Mammary epithelial cell (primary cell): ENCODE measurements at regions of chr22 and their contacts with region 1.

Region 1: DNA sequence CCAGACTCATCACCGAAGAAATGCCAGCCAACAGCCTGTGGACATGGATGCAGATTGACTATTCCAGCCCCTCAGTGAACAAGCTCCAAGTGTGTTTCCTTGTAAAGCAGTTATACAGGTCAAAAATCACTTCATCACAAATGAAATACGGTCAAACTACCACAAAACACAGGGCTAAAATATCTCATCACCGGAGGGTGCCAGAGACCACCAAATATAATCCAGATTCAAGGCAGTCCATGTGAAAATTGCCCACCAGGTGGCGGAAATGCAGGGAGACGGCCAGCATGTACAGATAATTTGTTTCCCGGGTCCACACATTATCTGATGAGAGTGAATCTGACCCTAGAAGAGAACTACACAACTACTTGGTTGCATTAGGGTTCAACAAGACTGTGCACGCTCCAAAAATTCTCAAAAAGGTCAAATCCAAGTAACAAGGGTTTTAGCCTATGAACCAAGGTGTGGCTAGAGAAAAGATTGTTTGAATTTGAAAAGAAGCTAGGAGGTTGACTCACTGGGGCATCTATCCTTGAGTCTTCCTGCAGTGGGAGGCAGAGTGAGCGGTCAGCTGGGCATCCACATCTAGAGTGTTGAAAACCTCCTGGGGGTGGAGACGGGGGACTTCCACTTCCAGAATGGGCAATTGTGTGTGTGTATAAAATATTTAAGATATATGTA is 71.7 kb downstream of the IGLL5 start:
- DNase-seq: peak; percentile 48
- H3K4me3 ChIP-seq: no peak overlapping the region
- H3K27ac ChIP-seq: no peak overlapping the region
- H3K4me1 ChIP-seq: no peaks in the 10 kb centered on the region
- H3K27me3 ChIP-seq: no peaks in the 10 kb centered on the region
- CTCF ChIP-seq: peak; percentile 67 to 81

Region 2: GRCh38 chr22:22463855-22464540 is 495.3 kb before region 1 on chr22:
- CTCF ChIA-PET with region 1: no interaction called
- dilution Hi-C with region 1: no loop called
- in situ Hi-C with region 1: no loop called
- intact Hi-C with region 1: loop called (anchors 1 kb)
- DNase-seq: peak; percentile 25
- H3K4me3 ChIP-seq: no peak overlapping the region
- H3K27ac ChIP-seq: no peak overlapping the region
- H3K4me1 ChIP-seq: no peaks in the 10 kb centered on the region
- H3K27me3 ChIP-seq: no peaks in the 10 kb centered on the region
- CTCF ChIP-seq: peak; percentile 45 to 62

Region 3: DNA sequence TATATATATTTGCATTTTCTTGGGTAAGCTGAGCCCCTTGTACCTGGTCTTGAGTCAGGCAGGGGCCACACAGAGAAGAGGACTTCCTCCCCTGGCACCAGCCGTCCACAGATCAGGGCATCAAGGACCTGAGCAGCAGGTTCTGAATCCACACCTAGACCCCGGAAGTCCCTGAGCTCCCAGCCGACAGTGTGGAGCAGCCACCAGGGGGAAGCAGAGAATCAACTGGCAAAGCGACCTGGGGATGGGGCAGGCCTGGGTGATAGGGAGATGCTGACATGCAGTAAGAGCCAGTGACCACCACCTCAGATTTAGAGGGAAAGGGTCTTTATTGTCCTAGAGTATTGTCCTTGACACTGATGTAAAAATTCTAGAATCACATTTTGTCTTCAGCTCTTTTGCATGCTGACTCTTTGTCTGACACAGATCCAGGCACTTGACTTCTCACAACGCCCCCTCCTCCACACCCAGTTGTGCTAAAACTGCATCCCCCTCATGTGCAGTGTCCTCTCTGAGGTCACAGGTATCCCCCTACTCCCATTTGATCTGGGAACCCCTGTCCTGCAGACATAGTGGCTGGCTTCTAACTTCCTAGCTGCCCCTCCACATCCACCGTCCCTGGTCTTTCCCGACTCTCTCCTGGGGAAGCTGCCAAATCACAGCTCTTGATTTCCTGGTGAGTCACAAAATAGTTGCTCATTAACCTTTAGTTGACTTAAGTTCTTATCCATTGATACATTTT is 205.6 kb before region 1 on chr22:
- CTCF ChIA-PET with region 1: no interaction called
- dilution Hi-C with region 1: no loop called
- in situ Hi-C with region 1: no loop called
- intact Hi-C with region 1: loop called (anchors 5 kb)
- DNase-seq: peak; percentile 5
- H3K4me3 ChIP-seq: no peak overlapping the region
- H3K27ac ChIP-seq: no peak overlapping the region
- H3K4me1 ChIP-seq: no peaks in the 10 kb centered on the region
- H3K27me3 ChIP-seq: no peaks in the 10 kb centered on the region
- CTCF ChIP-seq: peak; percentile 72 to 79

Region 4: GRCh38 chr22:22823131-22823810 is 136.0 kb before region 1 on chr22:
- CTCF ChIA-PET with region 1: no interaction called
- dilution Hi-C with region 1: no loop called
- in situ Hi-C with region 1: no loop called
- intact Hi-C with region 1: no loop called
- DNase-seq: no peak
- H3K4me3 ChIP-seq: no peak overlapping the region
- H3K27ac ChIP-seq: no peak overlapping the region
- H3K4me1 ChIP-seq: no peaks in the 10 kb centered on the region
- H3K27me3 ChIP-seq: no peaks in the 10 kb centered on the region
- CTCF ChIP-seq: no peak

Region 5: GRCh38 chr22:22848364-22848866 is 110.9 kb before region 1 on chr22:
- CTCF ChIA-PET with region 1: interaction called, 3 read pairs
- dilution Hi-C with region 1: no loop called
- in situ Hi-C with region 1: loop called in 1 of 2 experiments (anchors 10 kb)
- intact Hi-C with region 1: loop called (anchors 1 kb)
- DNase-seq: peak; percentile 28
- H3K4me3 ChIP-seq: no peak overlapping the region
- H3K27ac ChIP-seq: no peak overlapping the region
- H3K4me1 ChIP-seq: no peaks in the 10 kb centered on the region
- H3K27me3 ChIP-seq: no peaks in the 10 kb centered on the region
- CTCF ChIP-seq: peak; percentile 97 to 98

Region 6: DNA sequence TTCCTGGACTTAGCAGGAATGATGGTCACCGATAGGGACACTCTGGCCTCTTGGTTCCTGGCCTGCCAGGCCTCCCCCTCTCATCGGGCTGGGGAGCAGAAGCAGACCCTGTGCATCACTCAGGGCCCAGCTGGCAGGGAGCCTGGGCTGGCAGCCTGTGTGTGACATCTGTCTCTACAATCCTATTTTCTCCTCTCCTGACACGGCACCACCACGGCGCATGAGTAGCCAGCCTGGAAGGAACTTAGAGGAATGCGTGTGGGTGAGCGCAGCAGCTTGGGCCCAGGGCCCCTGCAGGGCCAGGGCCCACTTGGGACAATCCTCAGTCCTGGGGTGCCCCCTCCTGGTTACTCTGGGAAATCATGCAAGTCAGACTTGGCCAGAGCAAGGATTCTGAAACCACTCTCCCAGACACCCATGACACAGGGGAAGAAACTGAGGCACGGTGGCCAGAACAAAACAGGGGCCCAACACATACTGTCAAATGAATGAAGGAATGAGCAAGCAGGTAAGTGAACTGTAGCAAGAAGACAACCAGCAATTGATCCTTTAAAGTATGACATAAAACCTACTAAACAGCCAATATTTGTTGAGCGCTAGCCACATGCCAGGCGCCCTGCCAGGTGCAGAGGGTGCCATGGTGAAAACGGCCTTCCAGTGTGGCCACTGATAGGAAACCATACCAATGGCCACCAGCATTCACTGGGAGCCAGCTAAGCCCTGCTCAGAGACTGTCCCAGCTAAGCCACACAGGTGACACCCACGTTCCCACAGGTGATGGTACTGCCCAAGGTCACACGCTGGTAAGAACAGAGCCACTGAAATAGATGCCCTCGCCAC is 169.2 kb after region 1 on chr22:
- CTCF ChIA-PET with region 1: interaction called, 11 read pairs
- dilution Hi-C with region 1: no loop called
- in situ Hi-C with region 1: loop called (anchors 10 kb)
- intact Hi-C with region 1: loop called (anchors 1 kb)
- DNase-seq: peak; percentile 47
- H3K4me3 ChIP-seq: no peak overlapping the region
- H3K27ac ChIP-seq: no peak overlapping the region
- H3K4me1 ChIP-seq: no peaks in the 10 kb centered on the region
- H3K27me3 ChIP-seq: no peaks in the 10 kb centered on the region
- CTCF ChIP-seq: peak; percentile 50 to 79

Region 7: DNA sequence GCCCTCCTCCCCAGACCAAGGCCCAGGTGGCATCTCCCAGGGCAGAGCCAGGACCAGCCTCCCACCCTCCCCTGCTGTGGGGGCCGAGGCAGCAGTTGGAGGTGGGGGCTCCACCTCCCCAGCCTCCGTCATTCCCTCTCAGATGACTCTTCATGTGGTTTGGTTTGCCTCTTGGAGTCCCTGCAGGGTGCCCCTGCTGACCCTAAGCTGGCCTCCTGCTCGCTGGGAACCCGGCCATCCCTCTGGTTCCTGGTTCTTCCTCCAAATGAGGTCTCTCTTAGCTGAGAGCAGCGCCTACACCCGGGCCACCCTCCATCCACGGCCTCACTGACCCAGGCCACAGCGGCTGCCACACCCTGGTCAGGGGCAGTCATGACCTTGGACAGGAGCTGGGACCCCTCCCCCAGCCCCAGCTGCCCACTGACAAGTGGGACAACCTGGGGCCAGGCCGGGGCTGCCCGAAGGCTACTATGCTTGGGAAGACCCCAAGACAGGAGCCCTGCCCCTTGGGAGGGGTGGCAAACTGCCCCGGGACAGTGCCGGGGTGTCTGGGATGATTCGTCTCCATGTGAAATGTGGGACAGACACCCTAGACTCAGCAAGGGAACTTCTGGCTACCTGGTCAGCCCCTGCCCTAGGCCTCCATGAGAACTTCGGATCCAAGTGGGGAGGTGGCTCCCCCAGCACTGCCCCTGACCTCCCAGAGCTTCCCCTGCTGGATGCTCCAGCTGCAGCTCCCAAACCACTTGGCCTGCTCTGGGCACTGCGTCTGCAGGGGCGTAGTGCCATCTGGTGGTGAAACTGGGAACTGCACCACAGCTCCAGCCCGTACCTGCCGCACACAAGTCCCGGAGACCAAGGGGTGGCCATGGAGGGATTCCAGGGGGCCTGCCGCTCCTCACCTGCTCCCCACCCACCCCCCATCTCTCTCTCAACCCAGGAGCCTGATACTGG is 426.3 kb after region 1 on chr22:
- CTCF ChIA-PET with region 1: interaction called, 6 read pairs
- dilution Hi-C with region 1: no loop called
- in situ Hi-C with region 1: loop called in 1 of 2 experiments (anchors 25 kb)
- intact Hi-C with region 1: loop called (anchors 1 kb)
- DNase-seq: peak; percentile 49
- H3K4me3 ChIP-seq: no peak overlapping the region
- H3K27ac ChIP-seq: no peak overlapping the region
- H3K4me1 ChIP-seq: no peaks in the 10 kb centered on the region
- H3K27me3 ChIP-seq: no peaks in the 10 kb centered on the region
- CTCF ChIP-seq: peak; percentile 96 to 98